BJ (cell line): ENCODE measurements at regions of chr12 and their contacts with region 1.

Region 1: DNA sequence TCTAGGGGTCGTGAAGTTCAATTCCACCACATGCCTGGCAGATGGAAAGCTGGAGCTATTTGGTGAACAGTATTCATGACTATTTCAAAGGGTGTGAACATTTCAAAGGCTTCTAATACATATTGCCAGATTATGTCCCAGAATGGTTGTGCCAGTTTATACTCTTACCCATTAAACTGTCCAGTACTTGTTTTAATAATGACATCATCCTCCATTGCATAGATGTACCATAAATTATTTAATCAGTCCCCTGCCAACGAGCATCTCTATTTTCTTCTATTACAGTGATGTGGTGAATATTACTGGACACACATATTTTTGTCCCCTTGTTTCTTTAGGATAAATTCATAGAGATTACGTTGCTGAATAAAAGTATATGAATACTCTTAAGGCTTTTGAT is 299.8 kb downstream of the SUDS3 start:
- DNase-seq: no peak
- H3K4me3 ChIP-seq: no peak overlapping the region
- H3K27me3 ChIP-seq: no peaks in the 10 kb centered on the region
- CTCF ChIP-seq: no peak

Region 2: GRCh38 chr12:118448341-118448740 is 227.8 kb before region 1 on chr12:
- CTCF ChIA-PET with region 1: no interaction called
- POLR2A ChIA-PET with region 1: interaction called, 11 read pairs
- DNase-seq: no peak
- H3K4me3 ChIP-seq: no peak overlapping the region
- H3K27me3 ChIP-seq: no peaks in the 10 kb centered on the region
- CTCF ChIP-seq: no peak

Region 3: GRCh38 chr12:118946256-118946655 is 270.1 kb after region 1 on chr12:
- CTCF ChIA-PET with region 1: no interaction called
- POLR2A ChIA-PET with region 1: no interaction called
- DNase-seq: no peak
- H3K4me3 ChIP-seq: no peak overlapping the region
- H3K27me3 ChIP-seq: no peaks in the 10 kb centered on the region
- CTCF ChIP-seq: no peak